PC-9 (cell line): ENCODE measurements at regions of chr2 and their contacts with region 1.

Region 1: GRCh38 chr2:216583147-216583546 is 50.1 kb upstream of the IGFBP2 start:
- DNase-seq: peak; percentile 52 to 92
- H3K4me3 ChIP-seq: no peak overlapping the region
- H3K27ac ChIP-seq: peak overlapping the region; percentile 26; the same call in 1 of the 2 replicates
- H3K4me1 ChIP-seq: peaks cover 23% of the 10 kb centered on the region
- H3K27me3 ChIP-seq: no peaks in the 10 kb centered on the region
- CTCF ChIP-seq: no peak

Region 2: GRCh38 chr2:216159144-216159543 is 424.0 kb before region 1 on chr2:
- CTCF ChIA-PET with region 1: no interaction called
- POLR2A ChIA-PET with region 1: interaction called, 10 read pairs
- intact Hi-C with region 1: no loop called
- DNase-seq: no peak
- H3K4me3 ChIP-seq: no peak overlapping the region
- H3K27ac ChIP-seq: no peak overlapping the region
- H3K4me1 ChIP-seq: no peaks in the 10 kb centered on the region
- H3K27me3 ChIP-seq: no peaks in the 10 kb centered on the region
- CTCF ChIP-seq: no peak

Region 3: DNA sequence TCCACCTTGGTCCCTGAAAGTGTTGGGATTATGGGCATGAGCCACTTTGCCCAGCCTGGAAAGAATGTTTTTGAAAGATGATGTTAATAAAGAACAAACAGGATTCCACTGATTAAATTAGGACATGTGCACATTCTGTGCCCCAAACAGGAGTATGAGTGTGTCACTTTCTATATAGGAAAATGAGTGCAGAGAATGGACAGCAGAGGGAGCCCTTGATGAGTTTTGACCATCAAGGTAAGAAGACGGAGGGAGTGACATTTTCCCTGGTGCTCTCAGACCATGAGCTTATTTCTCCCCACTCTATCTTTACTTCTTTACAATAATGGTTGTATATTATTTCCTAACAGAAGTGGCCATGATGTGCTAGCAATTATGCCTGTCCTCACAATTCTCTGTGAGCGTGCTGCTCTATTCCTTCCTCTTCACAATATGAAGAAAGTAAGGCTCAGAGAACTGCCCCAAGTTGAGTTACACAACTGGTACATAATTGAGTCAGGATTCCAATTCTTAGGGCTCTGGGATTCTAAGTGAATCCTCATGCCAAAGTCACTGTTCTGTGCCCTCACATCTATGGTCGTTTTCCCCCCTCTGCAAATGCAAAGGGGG is 63.9 kb before region 1 on chr2:
- CTCF ChIA-PET with region 1: no interaction called
- POLR2A ChIA-PET with region 1: no interaction called
- intact Hi-C with region 1: no loop called
- DNase-seq: peak; percentile 53 to 64
- H3K4me3 ChIP-seq: no peak overlapping the region
- H3K27ac ChIP-seq: no peak overlapping the region
- H3K4me1 ChIP-seq: 0 out of 2 replicates have a peak, but pooled peaks cover 3% of the 10 kb centered on the region
- H3K27me3 ChIP-seq: no peaks in the 10 kb centered on the region
- CTCF ChIP-seq: peak; percentile 86

Region 4: GRCh38 chr2:216626179-216626874 is 43.2 kb after region 1 on chr2:
- CTCF ChIA-PET with region 1: no interaction called
- POLR2A ChIA-PET with region 1: no interaction called
- intact Hi-C with region 1: loop called (anchors 2 kb)
- DNase-seq: peak; percentile 47 to 87
- H3K4me3 ChIP-seq: peak overlapping the region; percentile 23
- H3K27ac ChIP-seq: peak overlapping the region; percentile 91
- H3K4me1 ChIP-seq: peaks cover 49% of the 10 kb centered on the region
- H3K27me3 ChIP-seq: no peaks in the 10 kb centered on the region
- CTCF ChIP-seq: no peak